Sigmoid colon (tissue), 7 donors: ENCODE measurements at regions of chr4 and their contacts with region 1.

Region 1: DNA sequence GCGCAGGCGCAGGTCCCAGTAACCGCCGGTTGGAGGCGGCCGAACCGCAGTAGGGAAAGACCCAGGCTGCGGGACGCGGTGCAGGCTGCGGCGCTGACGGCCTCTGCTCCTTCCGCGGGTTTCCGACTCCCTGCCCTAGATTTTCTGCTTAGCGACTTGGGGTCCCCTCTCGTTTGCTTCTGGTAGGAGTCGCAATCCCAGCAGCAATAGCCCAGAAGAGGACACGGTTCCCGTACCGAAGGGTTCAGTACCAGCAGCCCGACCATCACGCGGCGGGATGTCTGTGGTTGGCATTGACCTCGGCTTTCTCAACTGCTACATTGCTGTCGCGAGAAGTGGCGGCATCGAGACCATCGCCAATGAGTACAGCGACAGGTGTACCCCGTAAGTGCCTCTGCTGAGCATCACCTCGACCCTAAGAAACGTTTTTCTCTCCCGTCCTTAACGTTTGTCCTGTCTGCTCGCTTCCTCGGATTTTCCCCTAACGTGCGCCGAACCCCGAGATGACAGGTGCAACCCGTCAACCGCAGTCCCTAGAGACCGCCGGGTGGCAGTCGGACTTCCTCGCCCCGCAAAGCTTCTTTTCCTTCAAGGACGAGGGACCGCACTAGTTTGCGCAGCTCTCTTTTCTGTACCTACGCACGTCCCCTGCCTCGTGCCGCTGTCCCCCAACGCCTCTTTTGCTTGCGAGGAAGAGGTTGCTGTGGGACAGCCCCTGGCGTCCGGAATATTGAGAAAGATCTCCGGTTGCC is at the start of gene HSPA4L:
- DNase-seq: peak; percentile 93
- H3K4me3 ChIP-seq: peak within 1 kb of the TSS; percentile 55 to 73 (median 66)
- H3K27ac ChIP-seq: peak within 1 kb of the TSS; percentile 81 to 89 (median 86)
- H3K4me1 ChIP-seq: peaks cover 0 to 23% (median 8%) of the 10 kb centered on the region in 4 donors
- H3K27me3 ChIP-seq: no peaks in the 10 kb centered on the region
- CTCF ChIP-seq: peak in 2 of 4 experiments; percentile 12 to 15
- EP300 ChIP-seq: no peak
- POLR2A ChIP-seq: peak; percentile 57 to 75
- total RNA-seq, gene HSPA4L: 3.5 to 7.7 (median 5.2) TPM

Region 2: GRCh38 chr4:127632420-127633403 is 149.7 kb before region 1 on chr4 and contains the start of gene INTU:
- intact Hi-C with region 1: loop called (anchors 5 kb)
- DNase-seq: peak; percentile 97
- H3K4me3 ChIP-seq: peak within 1 kb of the TSS; percentile 52 to 68 (median 66)
- H3K27ac ChIP-seq: peak within 1 kb of the TSS; percentile 58 to 74 (median 72)
- H3K4me1 ChIP-seq: peaks cover 0 to 16% (median 8%) of the 10 kb centered on the region in 4 donors
- H3K27me3 ChIP-seq: peaks cover 0 to 4% (median 0%) of the 10 kb centered on the region in 3 donors
- CTCF ChIP-seq: no peak
- EP300 ChIP-seq: no peak
- POLR2A ChIP-seq: no peak
- total RNA-seq, gene INTU: 7.6 to 10.0 (median 9.5) TPM

Region 3: DNA sequence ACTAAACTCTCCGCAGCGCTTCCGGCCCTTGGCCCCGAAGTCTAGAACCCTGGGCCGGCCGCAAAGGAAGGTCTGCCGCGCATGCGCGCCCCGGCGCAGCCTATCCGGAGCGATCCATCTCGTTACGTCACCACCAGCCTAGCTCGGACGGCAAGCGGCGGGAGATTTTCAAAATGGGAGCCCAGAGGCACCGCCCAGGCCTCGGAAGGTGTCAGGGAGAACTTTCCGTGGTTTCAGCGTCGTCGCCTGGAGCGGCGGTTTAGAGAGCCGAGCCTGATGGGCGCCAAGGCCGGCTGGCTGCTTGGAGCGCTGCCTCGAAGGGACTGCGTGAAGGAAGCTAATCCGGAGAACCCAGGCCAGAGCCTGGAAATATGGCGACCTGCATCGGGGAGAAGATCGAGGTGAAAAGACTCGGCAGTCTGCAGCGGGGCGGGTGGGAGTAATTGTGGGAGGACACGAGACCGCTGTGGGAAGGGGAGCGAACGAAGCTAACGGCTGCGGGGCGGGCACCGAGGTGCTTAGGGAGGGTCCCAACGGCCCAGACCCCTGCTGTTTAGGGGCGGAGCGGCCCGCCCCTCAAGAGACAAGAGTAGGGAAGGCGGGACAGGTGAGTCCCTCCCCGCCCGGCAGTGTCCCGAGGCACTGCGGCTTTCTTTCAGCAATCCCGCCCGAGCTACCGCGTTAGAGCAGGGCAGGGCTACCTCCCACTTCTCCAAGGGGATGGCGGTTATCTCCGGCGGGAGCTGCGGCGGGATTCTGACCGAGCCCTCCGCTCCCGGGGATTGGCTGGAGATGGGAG is 98.5 kb after region 1 on chr4 and contains the start of gene PLK4:
- intact Hi-C with region 1: loop called (anchors 5 kb)
- DNase-seq: peak; percentile 97
- H3K4me3 ChIP-seq: peak within 1 kb of the TSS; percentile 49 to 81 (median 77)
- H3K27ac ChIP-seq: peak within 1 kb of the TSS; percentile 74 to 85 (median 79)
- H3K4me1 ChIP-seq: peaks cover 0 to 9% (median 8%) of the 10 kb centered on the region in 4 donors
- H3K27me3 ChIP-seq: no peaks in the 10 kb centered on the region
- CTCF ChIP-seq: no peak
- EP300 ChIP-seq: no peak
- POLR2A ChIP-seq: no peak
- total RNA-seq, gene PLK4: 0.16 to 1.7 (median 0.27) TPM in 3 of 4 donors, not detected in the other

Region 4: DNA sequence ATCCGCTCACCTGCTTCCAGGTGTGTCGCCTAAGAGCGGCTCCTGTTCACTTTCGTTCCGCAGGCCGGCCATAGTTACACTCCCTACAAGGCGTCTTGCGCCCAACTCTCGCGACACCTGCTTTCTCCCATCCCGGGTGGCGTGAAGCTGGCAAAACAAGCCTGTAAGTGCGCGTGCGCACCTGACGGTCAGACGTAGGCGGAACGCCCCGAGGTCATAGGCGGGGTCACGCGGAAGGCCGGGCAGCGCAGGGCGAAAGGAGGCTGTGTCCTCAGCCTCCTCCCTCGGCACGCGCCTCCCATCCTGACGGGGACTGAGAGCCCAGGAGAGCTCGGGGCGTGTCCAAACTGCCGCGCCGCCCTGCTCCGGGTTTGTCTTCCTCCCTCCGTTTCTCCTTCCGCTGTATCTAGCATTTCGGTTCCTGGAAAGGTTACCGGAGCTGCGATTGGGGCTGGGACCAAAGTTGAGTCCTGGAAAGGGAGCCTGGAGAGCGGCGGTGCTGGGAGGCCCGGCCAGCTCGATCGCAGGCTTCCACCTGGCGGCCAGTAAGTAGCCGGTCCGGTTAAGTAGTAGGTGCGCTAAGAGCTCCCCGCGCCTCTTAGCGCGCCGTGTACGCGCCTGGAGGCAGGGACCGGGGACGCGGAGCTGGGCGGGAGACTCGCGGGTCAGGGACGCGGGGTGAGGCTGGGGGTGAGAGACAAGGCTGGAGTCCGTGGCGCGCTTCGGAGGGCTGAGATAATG is 182.8 kb after region 1 on chr4 and contains the starts of genes ABHD18 and MFSD8:
- intact Hi-C with region 1: loop called (anchors 2 kb)
- DNase-seq: peak; percentile 100
- H3K4me3 ChIP-seq: peak within 1 kb of the TSS; percentile 77 to 96 (median 82)
- H3K27ac ChIP-seq: peak within 1 kb of the TSS; percentile 91 to 96 (median 95)
- H3K4me1 ChIP-seq: peaks cover 0 to 23% (median 17%) of the 10 kb centered on the region in 4 donors
- H3K27me3 ChIP-seq: no peaks in the 10 kb centered on the region
- CTCF ChIP-seq: peak; percentile 37 to 63 (median 44)
- EP300 ChIP-seq: peak in 1 of 4 donors; percentile 89
- POLR2A ChIP-seq: peak; percentile 46 to 54
- total RNA-seq, gene ABHD18: 6.7 to 15.2 (median 9.0) TPM
- total RNA-seq, gene MFSD8: 26.3 to 54.2 (median 41.8) TPM

Region 5: GRCh38 chr4:128060699-128061565 is 278.5 kb after region 1 on chr4 and contains the start of gene LARP1B:
- intact Hi-C with region 1: loop called (anchors 5 kb)
- DNase-seq: peak; percentile 97
- H3K4me3 ChIP-seq: peak within 1 kb of the TSS; percentile 86 to 92 (median 88)
- H3K27ac ChIP-seq: peak within 1 kb of the TSS; percentile 98
- H3K4me1 ChIP-seq: peaks cover 0 to 28% (median 17%) of the 10 kb centered on the region in 4 donors
- H3K27me3 ChIP-seq: no peaks in the 10 kb centered on the region
- CTCF ChIP-seq: no peak
- EP300 ChIP-seq: no peak
- POLR2A ChIP-seq: peak; percentile 50 to 75
- total RNA-seq, gene LARP1B: 18.2 to 30.3 (median 20.3) TPM

Region 6: GRCh38 chr4:128275346-128275745 is 492.9 kb after region 1 on chr4:
- intact Hi-C with region 1: no loop called
- DNase-seq: no peak
- H3K4me3 ChIP-seq: no peak overlapping the region
- H3K27ac ChIP-seq: no peak overlapping the region
- H3K4me1 ChIP-seq: peaks cover 0 to 16% (median 9%) of the 10 kb centered on the region in 4 donors
- H3K27me3 ChIP-seq: no peaks in the 10 kb centered on the region
- CTCF ChIP-seq: no peak
- EP300 ChIP-seq: no peak
- POLR2A ChIP-seq: no peak

Region 7: GRCh38 chr4:128718768-128719167 is 936.3 kb after region 1 on chr4:
- intact Hi-C with region 1: no loop called
- DNase-seq: no peak
- H3K4me3 ChIP-seq: no peak overlapping the region
- H3K27ac ChIP-seq: peak overlapping the region in 2 of 4 donors; percentile 12 to 39
- H3K4me1 ChIP-seq: peaks cover 0 to 39% (median 34%) of the 10 kb centered on the region in 4 donors
- H3K27me3 ChIP-seq: no peaks in the 10 kb centered on the region
- CTCF ChIP-seq: no peak
- EP300 ChIP-seq: no peak
- POLR2A ChIP-seq: no peak